Esophagus muscularis mucosa (tissue), 4 donors: ENCODE measurements at regions of chr18 and their contacts with region 1.

Region 1: GRCh38 chr18:76803814-76804213 is 18.5 kb upstream of the ZNF236 start:
- DNase-seq: peak; percentile 94
- H3K4me3 ChIP-seq: no peak overlapping the region
- H3K27ac ChIP-seq: no peak overlapping the region
- H3K4me1 ChIP-seq: peaks cover 14 to 20% (median 19%) of the 10 kb centered on the region in 4 donors
- H3K27me3 ChIP-seq: peaks cover 0 to 6% (median 3%) of the 10 kb centered on the region in 4 donors
- CTCF ChIP-seq: peak; percentile 59 to 84 (median 73)
- EP300 ChIP-seq: no peak
- POLR2A ChIP-seq: no peak

Region 2: GRCh38 chr18:76450452-76451395 is 353.1 kb before region 1 on chr18:
- intact Hi-C with region 1: no loop called
- DNase-seq: no peak
- H3K4me3 ChIP-seq: peak overlapping the region; percentile 58 to 70 (median 64)
- H3K27ac ChIP-seq: peak overlapping the region; percentile 82 to 90 (median 86)
- H3K4me1 ChIP-seq: peaks cover 52 to 93% (median 90%) of the 10 kb centered on the region in 4 donors
- H3K27me3 ChIP-seq: no peaks in the 10 kb centered on the region
- CTCF ChIP-seq: no peak
- EP300 ChIP-seq: no peak
- POLR2A ChIP-seq: no peak

Region 3: DNA sequence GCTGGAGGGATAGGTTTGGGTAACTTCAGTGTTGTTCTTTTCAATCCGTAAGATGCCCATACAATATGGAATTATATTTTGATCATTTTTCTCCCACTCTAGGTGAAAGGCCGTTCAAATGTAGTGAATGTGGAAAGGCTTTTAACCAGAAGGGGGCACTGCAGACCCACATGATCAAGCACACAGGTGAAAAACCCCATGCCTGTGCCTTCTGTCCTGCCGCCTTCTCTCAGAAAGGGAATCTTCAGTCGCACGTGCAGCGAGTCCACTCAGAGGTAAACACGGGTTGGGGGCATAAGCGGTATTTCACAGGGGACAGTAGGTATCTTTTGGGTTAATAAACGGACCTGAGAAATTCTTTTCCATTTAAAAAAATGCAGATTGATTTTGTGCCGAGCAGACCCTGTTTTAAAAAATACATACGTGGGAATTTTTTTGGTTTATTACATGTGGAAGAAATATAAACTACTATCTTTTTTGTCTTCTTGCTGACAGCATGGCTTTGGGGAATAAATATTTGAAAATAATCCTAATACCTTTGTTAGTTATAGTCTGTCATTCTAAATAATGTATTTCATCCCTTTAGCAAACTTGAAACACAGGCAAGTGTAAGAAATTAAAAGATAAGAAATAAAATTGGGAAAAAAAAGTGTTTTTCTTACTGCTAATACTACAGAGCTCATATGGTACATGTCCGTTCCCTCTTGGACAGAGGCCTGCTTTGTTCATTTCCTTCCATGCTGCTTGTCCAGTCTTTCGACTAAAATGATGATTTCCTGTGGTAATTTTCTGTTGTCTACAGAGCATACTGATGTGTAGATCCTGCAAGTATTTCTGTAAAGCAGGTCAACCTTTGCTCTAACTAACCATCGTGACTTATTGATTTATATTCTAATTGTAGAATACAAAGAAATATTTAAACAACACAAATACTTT is 71.8 kb after region 1 on chr18:
- intact Hi-C with region 1: loop called (anchors 2 kb)
- DNase-seq: no peak
- H3K4me3 ChIP-seq: no peak overlapping the region
- H3K27ac ChIP-seq: no peak overlapping the region
- H3K4me1 ChIP-seq: peaks cover 0 to 5% (median 0%) of the 10 kb centered on the region in 4 donors
- H3K27me3 ChIP-seq: no peaks in the 10 kb centered on the region
- CTCF ChIP-seq: peak; percentile 38 to 65 (median 44)
- EP300 ChIP-seq: no peak
- POLR2A ChIP-seq: no peak

Region 4: GRCh38 chr18:76886112-76886511 is 82.3 kb after region 1 on chr18:
- intact Hi-C with region 1: no loop called
- DNase-seq: no peak
- H3K4me3 ChIP-seq: no peak overlapping the region
- H3K27ac ChIP-seq: no peak overlapping the region
- H3K4me1 ChIP-seq: no peaks in the 10 kb centered on the region
- H3K27me3 ChIP-seq: no peaks in the 10 kb centered on the region
- CTCF ChIP-seq: no peak
- EP300 ChIP-seq: no peak
- POLR2A ChIP-seq: no peak

Region 5: DNA sequence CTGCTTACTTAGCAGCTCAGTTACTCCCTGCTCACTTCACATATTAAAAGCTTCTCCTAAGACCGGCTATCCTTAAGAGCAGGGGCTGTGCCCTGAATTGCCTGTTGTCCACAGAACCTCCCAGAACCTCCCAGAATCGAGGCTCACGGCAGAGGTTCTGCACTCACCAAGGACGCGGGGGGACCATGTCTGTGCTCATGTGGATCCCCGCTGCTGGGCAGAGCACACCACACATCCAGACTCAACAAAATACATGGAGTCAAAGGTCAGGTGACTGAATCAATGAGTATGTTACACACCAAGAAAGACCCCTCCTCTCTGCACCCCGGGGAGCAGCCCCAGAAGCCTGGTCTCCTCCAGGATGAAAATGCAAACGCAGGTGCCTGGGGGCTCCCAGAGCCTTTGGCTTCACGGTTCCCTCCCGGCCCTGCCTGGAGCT is 179.8 kb after region 1 on chr18:
- intact Hi-C with region 1: loop called (anchors 2 kb)
- DNase-seq: no peak
- H3K4me3 ChIP-seq: no peak overlapping the region
- H3K27ac ChIP-seq: no peak overlapping the region
- H3K4me1 ChIP-seq: peaks cover 0 to 10% (median 8%) of the 10 kb centered on the region in 4 donors
- H3K27me3 ChIP-seq: no peaks in the 10 kb centered on the region
- CTCF ChIP-seq: no peak
- EP300 ChIP-seq: no peak
- POLR2A ChIP-seq: no peak